GM13976 (cell line): ENCODE measurements at regions of chr5 and their contacts with region 1.

Region 1: DNA sequence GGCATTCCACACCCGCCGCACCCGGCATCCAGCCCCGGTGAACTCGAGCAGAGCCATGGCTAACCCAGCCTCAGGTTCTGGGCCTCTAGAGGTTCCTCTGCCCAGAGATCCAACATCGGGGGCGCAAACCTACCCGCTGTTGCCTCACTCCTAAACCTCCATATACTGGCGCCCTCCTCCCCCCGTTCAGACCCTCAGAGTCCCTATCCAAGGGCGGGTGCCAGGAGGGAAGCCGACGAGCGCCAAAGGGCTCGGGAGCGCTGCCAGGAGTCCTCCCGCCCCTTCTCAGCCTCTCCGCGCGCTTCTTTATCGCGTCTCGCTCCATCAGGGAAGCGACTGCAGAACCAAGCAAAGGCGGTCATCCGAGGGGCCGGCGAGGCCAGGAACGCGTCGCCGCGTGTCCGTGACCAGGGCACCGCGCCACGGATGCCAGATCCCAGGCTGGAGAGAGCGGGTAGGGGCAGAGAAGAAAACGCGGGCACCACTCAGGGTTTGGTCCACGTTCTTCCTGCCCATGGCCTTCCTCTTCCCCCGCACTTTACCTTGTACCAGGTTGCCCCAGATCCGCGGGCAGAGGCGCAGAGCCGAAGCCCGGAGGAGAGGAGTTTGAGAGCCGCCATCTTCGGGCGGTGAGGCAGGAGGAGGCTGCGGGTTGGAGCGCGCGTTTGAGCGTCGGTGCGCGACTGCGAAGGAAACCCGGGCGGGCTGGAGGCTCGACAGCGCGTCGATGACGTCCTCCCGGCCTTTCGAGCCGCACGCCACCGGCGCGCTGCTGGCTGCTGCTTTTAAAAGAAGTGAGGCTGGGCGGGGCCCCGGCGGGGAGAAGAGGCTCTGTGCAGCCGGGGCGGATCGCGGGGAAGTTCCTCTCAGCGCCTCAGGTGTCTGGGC is at the start of gene OXCT1:
- DNase-seq: peak; percentile 95
- CTCF ChIP-seq: no peak

Region 2: GRCh38 chr5:42767491-42768105 is 897.6 kb after region 1 on chr5:
- in situ Hi-C with region 1: loop called (anchors 25 kb)
- DNase-seq: peak; percentile 27
- CTCF ChIP-seq: peak; percentile 6